CD8-positive, alpha-beta T cell (primary cell): ENCODE measurements at regions of chr18 and their contacts with region 1.

Region 1: GRCh38 chr18:23049698-23050373 is 85.4 kb upstream of the CABLES1 start:
- DNase-seq: peak in 2 of 9 experiments; percentile 29 to 55
- ATAC-seq: peak; percentile 77
- H3K4me3 ChIP-seq: no peak overlapping the region
- H3K4me3 Mint-ChIP-seq: no peak overlapping the region
- H3K27ac ChIP-seq: no peak overlapping the region
- H3K27ac Mint-ChIP-seq: peak overlapping the region; percentile 52
- H3K4me1 ChIP-seq: peaks cover 10% of the 10 kb centered on the region
- H3K4me1 Mint-ChIP-seq: peaks cover 15% of the 10 kb centered on the region
- H3K27me3 ChIP-seq: no peaks in the 10 kb centered on the region
- H3K27me3 Mint-ChIP-seq: no peaks in the 10 kb centered on the region
- CTCF ChIP-seq: no peak

Region 2: DNA sequence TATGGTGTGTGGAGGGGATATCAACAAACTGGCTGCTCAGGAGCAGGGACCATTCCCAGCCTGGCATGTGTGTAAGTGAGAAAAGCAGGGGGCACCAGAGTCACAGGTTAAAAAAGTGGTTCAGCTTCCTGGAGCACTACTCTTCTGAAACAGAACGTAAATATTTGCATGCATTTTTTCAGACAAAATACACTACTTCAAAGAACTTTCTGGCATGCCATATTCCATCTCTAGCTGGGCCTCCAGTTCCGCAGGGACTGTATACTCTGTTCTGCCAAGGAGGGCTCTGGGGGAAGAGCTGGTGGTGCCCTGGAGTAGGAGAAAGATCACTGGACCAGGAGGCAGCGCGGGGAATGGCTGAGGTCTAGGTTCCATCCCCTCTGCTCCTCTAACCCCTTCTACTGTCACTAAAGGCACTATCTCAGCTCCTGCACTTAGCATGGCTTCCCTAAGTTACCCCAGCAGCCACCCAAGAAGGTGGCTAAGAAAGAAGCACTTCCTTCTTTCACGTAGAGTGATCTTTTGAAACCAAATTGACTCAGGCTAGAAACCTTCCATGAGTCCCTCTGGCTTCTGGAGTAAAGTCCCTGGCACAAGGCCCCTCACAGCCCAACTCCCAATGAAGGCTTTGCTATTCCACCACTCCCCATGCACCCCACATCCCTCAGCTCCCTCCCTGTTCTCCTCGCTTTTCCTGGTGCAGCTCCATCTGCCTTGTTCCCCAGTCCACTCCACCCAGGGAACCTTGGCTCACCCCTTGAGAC is 27.8 kb after region 1 on chr18:
- CTCF ChIA-PET with region 1: no interaction called
- POLR2A ChIA-PET with region 1: no interaction called
- intact Hi-C with region 1: loop called in 1 of 2 experiments (anchors 5 kb)
- DNase-seq: peak in 1 of 9 experiments; percentile 18
- ATAC-seq: no peak
- H3K4me3 ChIP-seq: no peak overlapping the region
- H3K4me3 Mint-ChIP-seq: no peak overlapping the region
- H3K27ac ChIP-seq: no peak overlapping the region
- H3K27ac Mint-ChIP-seq: no peak overlapping the region
- H3K4me1 ChIP-seq: peaks cover 4% of the 10 kb centered on the region
- H3K4me1 Mint-ChIP-seq: peaks cover 31% of the 10 kb centered on the region
- H3K27me3 ChIP-seq: no peaks in the 10 kb centered on the region
- H3K27me3 Mint-ChIP-seq: peaks cover 3% of the 10 kb centered on the region
- CTCF ChIP-seq: no peak